ENCODE measurements at regions of chr13 and their contacts with region 1.

Region 1: DNA sequence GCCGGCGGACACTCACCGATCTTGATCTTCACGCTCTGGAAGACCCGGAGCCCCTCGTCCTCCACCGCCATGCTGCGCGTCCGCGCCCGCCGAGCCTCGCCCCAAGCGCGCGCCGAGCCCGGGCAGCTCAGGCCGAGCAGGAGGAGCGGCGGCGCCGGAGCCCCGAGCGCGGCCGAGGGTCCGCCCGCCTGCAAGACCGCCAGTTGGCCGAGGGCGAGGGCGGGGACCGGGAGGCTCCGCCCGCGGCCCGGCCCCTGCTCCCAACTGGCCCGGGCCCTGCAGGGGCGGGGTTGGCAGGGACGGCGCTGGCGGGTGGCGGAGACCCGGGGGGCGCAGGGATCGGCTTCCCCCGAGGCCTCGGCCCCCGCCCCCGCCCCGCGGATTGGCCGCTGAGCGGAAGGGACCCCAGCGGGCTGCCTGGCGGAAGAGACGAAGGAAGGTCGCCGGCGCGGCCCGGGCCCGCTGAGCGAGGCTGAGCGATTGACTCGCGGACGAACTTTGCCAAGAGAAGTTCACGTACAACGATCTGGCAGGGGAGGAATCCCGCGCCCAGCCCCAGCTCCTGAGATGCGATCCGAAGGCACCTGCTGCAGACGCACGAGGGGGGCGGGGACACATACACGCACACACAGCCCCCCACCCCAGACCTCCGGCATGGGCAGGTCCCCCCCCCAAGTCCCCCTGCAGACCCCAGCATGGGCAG is at the start of gene RASA3:
- DNase-seq: peak; percentile 88
- H3K4me3 ChIP-seq: peak within 1 kb of the TSS; percentile 58 to 97 (median 76)
- H3K27ac ChIP-seq: peak within 1 kb of the TSS; percentile 74 to 88 (median 84)
- H3K4me1 ChIP-seq: peaks cover 0 to 39% (median 31%) of the 10 kb centered on the region in 4 donors
- H3K27me3 ChIP-seq: no peaks in the 10 kb centered on the region
- CTCF ChIP-seq: no peak
- EP300 ChIP-seq: no peak
- POLR2A ChIP-seq: no peak
- total RNA-seq, gene RASA3: 15.0 to 22.4 (median 17.8) TPM

Region 2: GRCh38 chr13:113951246-113951999 is 181.1 kb before region 1 on chr13:
- intact Hi-C with region 1: loop called (anchors 5 kb)
- DNase-seq: peak; percentile 93
- H3K4me3 ChIP-seq: peak overlapping the region in 3 of 4 donors; percentile 25 to 36 (median 33)
- H3K27ac ChIP-seq: peak overlapping the region in 2 of 4 donors; percentile 25 to 42
- H3K4me1 ChIP-seq: peaks cover 0 to 22% (median 15%) of the 10 kb centered on the region in 4 donors
- H3K27me3 ChIP-seq: no peaks in the 10 kb centered on the region
- CTCF ChIP-seq: peak; percentile 71 to 88 (median 82)
- EP300 ChIP-seq: no peak
- POLR2A ChIP-seq: no peak

Region 3: GRCh38 chr13:114032177-114032799 is 100.3 kb before region 1 on chr13:
- intact Hi-C with region 1: loop called (anchors 5 kb)
- DNase-seq: no peak
- H3K4me3 ChIP-seq: no peak overlapping the region
- H3K27ac ChIP-seq: peak overlapping the region; percentile 22 to 58 (median 52)
- H3K4me1 ChIP-seq: peaks cover 0 to 54% (median 36%) of the 10 kb centered on the region in 4 donors
- H3K27me3 ChIP-seq: no peaks in the 10 kb centered on the region
- CTCF ChIP-seq: no peak
- EP300 ChIP-seq: no peak
- POLR2A ChIP-seq: no peak